Endothelial cell of umbilical vein (primary cell): ENCODE measurements at regions of chr6 and their contacts with region 1.

Region 1: DNA sequence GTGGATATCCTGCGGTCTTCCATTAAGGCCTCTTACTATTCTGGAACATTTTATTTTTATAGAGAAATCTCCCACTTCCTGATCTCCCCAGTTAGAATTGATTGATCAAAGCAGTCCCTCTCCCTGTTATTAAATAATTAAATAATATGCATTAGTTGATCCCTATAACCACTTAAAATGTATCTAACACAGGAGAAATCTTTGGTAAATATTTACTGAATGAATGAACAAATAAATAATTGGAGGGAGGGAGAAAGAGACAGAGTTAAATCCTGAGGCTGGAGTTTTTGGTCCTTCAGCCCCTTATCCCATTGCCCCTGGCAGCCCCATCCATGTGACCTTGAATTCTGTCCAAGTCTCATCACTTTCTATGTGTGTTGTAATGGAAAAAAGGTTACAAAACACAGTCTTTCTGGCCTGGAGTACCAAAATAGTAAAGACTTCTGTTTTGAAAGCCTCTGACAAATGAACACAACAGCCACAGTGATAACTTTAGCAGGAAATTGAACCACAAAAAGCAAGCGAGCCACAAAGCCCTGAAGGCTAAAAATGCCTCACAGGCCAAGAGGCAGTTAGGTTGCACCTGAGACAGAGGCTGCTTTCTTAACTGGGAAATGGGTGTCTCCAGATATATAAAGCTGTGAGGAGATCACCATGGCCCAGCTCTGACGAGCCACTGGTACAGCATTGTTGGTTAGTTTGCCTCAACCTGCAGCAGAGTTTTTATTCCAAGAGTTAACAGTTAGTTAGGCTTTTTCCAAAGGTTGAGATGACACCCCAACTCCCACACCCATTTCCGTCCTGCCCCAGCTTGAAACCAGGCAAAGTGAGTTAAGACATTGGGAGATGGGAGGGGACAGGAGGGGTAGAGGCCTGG is 11.3 kb downstream of the NT5E start:
- DNase-seq: peak; percentile 61
- H3K4me3 ChIP-seq: peak overlapping the region in 1 of 3 experiments; percentile 8
- H3K27ac ChIP-seq: peak overlapping the region; percentile 100
- H3K4me1 ChIP-seq: peaks cover 90% of the 10 kb centered on the region
- H3K27me3 ChIP-seq: no peaks in the 10 kb centered on the region
- CTCF ChIP-seq: no peak
- POLR2A ChIP-seq: no peak

Region 2: GRCh38 chr6:84667252-84668213 is 793.6 kb before region 1 on chr6:
- CTCF ChIA-PET with region 1: no interaction called
- POLR2A ChIA-PET with region 1: no interaction called
- dilution Hi-C with region 1: no loop called
- intact Hi-C with region 1: loop called (anchors 1 kb)
- DNase-seq: peak; percentile 88
- H3K4me3 ChIP-seq: no peak overlapping the region
- H3K27ac ChIP-seq: peak overlapping the region; percentile 89
- H3K4me1 ChIP-seq: peaks cover 17% of the 10 kb centered on the region
- H3K27me3 ChIP-seq: no peaks in the 10 kb centered on the region
- CTCF ChIP-seq: no peak
- POLR2A ChIP-seq: no peak

Region 3: GRCh38 chr6:85404502-85405174 is 56.5 kb before region 1 on chr6:
- CTCF ChIA-PET with region 1: interaction called, 23 read pairs
- POLR2A ChIA-PET with region 1: interaction called, 9 read pairs
- dilution Hi-C with region 1: no loop called
- intact Hi-C with region 1: loop called (anchors 1 kb)
- DNase-seq: peak; percentile 93
- H3K4me3 ChIP-seq: peak overlapping the region in 1 of 3 experiments; percentile 14
- H3K27ac ChIP-seq: peak overlapping the region; percentile 94
- H3K4me1 ChIP-seq: peaks cover 55% of the 10 kb centered on the region
- H3K27me3 ChIP-seq: no peaks in the 10 kb centered on the region
- CTCF ChIP-seq: no peak
- POLR2A ChIP-seq: peak; percentile 43

Region 4: DNA sequence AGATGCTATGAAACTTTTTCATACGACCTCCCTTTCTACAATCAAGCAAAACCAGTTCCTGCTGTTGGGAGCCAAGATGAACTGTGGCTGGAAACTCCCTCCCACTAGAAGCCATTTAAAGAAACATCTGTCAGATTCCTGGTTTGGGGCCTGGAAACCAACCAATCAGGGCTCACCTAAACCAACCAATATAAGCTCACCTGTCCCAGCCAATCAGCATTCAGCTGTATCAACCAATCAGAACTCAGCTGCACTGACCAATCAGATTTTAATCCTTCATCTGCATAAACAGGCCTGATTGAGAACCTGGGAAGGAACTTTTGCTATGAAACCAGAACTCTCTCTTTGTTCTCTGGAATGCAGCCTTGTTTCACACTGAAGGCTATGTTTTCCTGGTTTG is 90.1 kb after region 1 on chr6:
- CTCF ChIA-PET with region 1: no interaction called
- POLR2A ChIA-PET with region 1: no interaction called
- dilution Hi-C with region 1: no loop called
- intact Hi-C with region 1: no loop called
- DNase-seq: no peak
- H3K4me3 ChIP-seq: no peak overlapping the region
- H3K27ac ChIP-seq: no peak overlapping the region
- H3K4me1 ChIP-seq: no peaks in the 10 kb centered on the region
- H3K27me3 ChIP-seq: no peaks in the 10 kb centered on the region
- CTCF ChIP-seq: no peak
- POLR2A ChIP-seq: no peak

Region 5: GRCh38 chr6:85593438-85594196 is 132.5 kb after region 1 on chr6 and contains the start of gene SNX14:
- CTCF ChIA-PET with region 1: no interaction called
- POLR2A ChIA-PET with region 1: no interaction called
- dilution Hi-C with region 1: no loop called
- intact Hi-C with region 1: loop called (anchors 1 kb)
- DNase-seq: peak; percentile 97
- H3K4me3 ChIP-seq: peak within 1 kb of the TSS; percentile 80 to 96 (median 92)
- H3K27ac ChIP-seq: peak within 1 kb of the TSS; percentile 82
- H3K4me1 ChIP-seq: peaks cover 16% of the 10 kb centered on the region
- H3K27me3 ChIP-seq: no peaks in the 10 kb centered on the region
- CTCF ChIP-seq: peak in 1 of 2 donors; percentile 2
- POLR2A ChIP-seq: peak; percentile 61
- total RNA-seq, gene SNX14: 64.9 and 74.3 TPM in 2 replicates